ENCODE measurements at regions of chr16 and their contacts with region 1.

Region 1: GRCh38 chr16:51151961-51152663 is 1.0 kb upstream of the SALL1 start:
- DNase-seq: peak; percentile 84 to 94
- H3K4me3 ChIP-seq: peak overlapping the region; percentile 88
- H3K4me1 ChIP-seq: peaks cover 25% of the 10 kb centered on the region
- H3K27me3 ChIP-seq: no peaks in the 10 kb centered on the region

Region 2: GRCh38 chr16:51762081-51762996 is 610.2 kb after region 1 on chr16:
- in situ Hi-C with region 1: loop called (anchors 25 kb)
- DNase-seq: peak; percentile 70 to 90
- H3K4me3 ChIP-seq: no peak overlapping the region
- H3K4me1 ChIP-seq: peaks cover 4% of the 10 kb centered on the region
- H3K27me3 ChIP-seq: no peaks in the 10 kb centered on the region